Aorta (tissue), 5 donors: ENCODE measurements at regions of chrX and their contacts with region 1.

Region 1: DNA sequence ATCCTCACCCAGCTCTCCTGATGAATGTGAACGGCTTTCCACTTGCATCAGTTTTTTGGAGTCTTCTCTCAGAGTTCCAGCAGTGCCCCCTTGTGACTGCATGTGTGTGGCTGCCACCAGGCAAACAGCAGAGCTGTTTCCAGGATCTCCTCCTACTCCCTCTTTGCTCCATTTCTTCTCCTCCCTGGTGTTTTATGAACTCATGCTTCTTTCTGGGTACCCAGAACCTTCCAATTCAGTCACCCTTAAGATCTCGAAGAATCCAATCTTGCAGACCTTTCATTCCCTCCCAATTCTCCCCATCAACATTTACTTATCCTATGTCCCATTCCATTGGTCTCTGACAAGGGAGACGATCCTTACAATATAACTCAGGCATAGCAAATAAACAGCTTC is 6.8 kb upstream of the TCEANC start:
- DNase-seq: peak; percentile 71 to 85
- ATAC-seq: peak; percentile 77
- H3K4me3 ChIP-seq: no peak overlapping the region
- H3K27ac ChIP-seq: no peak overlapping the region
- H3K4me1 ChIP-seq: peaks cover 0 to 2% of the 10 kb centered on the region in 2 donors
- H3K27me3 ChIP-seq: no peaks in the 10 kb centered on the region

Region 2: GRCh38 chrX:12946838-12947544 is 699.2 kb before region 1 on chrX:
- intact Hi-C with region 1: loop called in 1 of 2 experiments (anchors 5 kb)
- DNase-seq: peak in 1 of 2 donors; percentile 75
- ATAC-seq: peak; percentile 89
- H3K4me3 ChIP-seq: no peak overlapping the region
- H3K27ac ChIP-seq: no peak overlapping the region
- H3K4me1 ChIP-seq: no peaks in the 10 kb centered on the region
- H3K27me3 ChIP-seq: no peaks in the 10 kb centered on the region

Region 3: GRCh38 chrX:13506574-13506973 is 139.6 kb before region 1 on chrX:
- intact Hi-C with region 1: loop called (anchors 1 to 2 kb)
- DNase-seq: peak in 1 of 2 donors; percentile 80
- ATAC-seq: no peak
- H3K4me3 ChIP-seq: no peak overlapping the region
- H3K27ac ChIP-seq: no peak overlapping the region
- H3K4me1 ChIP-seq: no peaks in the 10 kb centered on the region
- H3K27me3 ChIP-seq: no peaks in the 10 kb centered on the region

Region 4: DNA sequence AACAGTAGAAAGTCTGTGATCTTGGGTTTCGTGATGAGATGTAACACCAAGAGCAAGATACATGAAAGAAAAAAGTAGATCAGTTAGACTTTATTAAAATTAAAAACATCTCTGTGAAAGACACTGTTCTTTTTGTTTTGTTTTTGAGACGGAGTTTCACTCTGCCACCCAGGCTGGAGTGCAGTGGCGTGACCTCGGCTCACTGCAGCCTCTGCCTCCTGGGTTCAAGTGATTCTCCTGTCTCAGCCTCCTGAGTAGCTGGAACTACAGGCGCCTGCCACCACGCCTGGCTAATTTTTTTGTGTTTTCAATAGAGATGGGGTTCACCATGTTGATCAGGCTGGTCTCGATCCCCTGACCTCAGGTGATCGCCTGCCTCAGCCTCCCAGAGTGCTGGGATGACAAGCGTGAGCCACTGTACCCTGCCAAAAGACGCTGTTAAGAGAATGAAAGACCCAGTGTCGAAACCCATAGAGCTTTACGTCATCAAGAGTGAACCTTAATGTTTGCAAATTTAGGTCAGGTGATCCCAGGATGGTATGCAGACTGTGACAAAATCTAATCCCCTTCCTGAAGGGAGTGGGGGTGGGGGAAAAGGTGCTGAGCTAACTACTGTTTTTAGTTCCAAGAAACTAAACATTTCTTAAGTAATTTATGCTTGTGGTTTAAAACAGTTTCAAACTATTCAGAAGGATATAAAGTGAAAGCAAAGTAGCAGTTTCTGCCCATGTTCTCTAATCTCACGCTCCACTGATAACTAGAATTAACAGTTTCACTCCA is 96.4 kb after region 1 on chrX:
- intact Hi-C with region 1: no loop called
- DNase-seq: no peak
- ATAC-seq: no peak
- H3K4me3 ChIP-seq: no peak overlapping the region
- H3K27ac ChIP-seq: no peak overlapping the region
- H3K4me1 ChIP-seq: no peaks in the 10 kb centered on the region
- H3K27me3 ChIP-seq: no peaks in the 10 kb centered on the region